ENCODE measurements at regions of chr6 and their contacts with region 1.

Region 1: GRCh38 chr6:109095027-109095834 is at the start of gene CEP57L1:
- DNase-seq: peak; percentile 94 to 97
- ATAC-seq: peak; percentile 71 to 87 (median 74)
- H3K4me3 ChIP-seq: peak within 1 kb of the TSS; percentile 64
- H3K4me3 Mint-ChIP-seq: peak within 1 kb of the TSS; percentile 94
- H3K27ac ChIP-seq: peak within 1 kb of the TSS; percentile 98
- H3K27ac Mint-ChIP-seq: peak within 1 kb of the TSS; percentile 98 to 99
- H3K4me1 ChIP-seq: peaks cover 8% of the 10 kb centered on the region
- H3K4me1 Mint-ChIP-seq: peaks cover 42 to 52% of the 10 kb centered on the region in 2 donors
- H3K27me3 ChIP-seq: no peaks in the 10 kb centered on the region
- H3K27me3 Mint-ChIP-seq: no peaks in the 10 kb centered on the region
- CTCF ChIP-seq: no peak
- total RNA-seq, gene CEP57L1: 8.9 to 12.5 (median 9.2) TPM

Region 2: DNA sequence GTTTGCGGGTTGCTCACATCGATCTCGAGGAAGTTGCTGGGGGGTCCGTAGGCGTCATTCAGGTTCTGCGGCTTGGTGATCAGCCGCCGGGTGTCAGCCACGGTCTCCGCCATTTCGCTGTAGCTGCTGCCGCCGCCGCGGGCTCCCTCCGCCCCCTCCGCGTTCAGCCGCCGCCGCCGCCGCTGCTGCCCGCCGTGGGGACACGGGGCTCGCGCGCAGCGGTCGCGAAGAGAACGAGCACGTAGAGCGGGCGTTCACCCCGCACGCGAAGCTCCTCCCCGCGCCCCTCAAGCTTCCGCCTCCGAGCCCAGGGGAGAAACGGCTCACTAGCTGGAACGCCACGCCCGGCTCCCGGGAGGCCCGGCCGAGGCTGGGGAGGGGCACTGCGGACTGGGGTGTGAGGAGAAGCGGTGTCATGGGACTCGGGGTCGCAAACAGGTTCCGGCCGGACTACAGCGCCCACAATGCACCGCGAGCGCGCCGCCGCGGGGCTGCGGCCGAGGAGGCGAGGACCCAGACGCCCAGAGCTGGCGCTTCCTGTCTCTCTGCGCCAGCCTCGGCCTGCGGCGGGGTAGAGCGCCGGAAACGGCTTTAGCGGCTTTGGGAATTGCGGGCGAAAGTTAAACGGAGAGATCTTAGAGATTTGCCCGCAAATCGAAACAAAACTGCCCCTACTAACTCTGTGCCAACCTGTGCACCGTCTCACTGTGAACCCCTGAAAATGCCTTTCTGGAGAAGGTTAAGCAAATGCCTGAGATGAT is 834.2 kb before region 1 on chr6 and contains the start of gene SNX3:
- intact Hi-C with region 1: loop called (anchors 10 kb)
- DNase-seq: peak; percentile 91 to 93
- ATAC-seq: peak; percentile 83 to 95 (median 86)
- H3K4me3 ChIP-seq: peak within 1 kb of the TSS; percentile 89
- H3K4me3 Mint-ChIP-seq: peak within 1 kb of the TSS; percentile 93
- H3K27ac ChIP-seq: peak within 1 kb of the TSS; percentile 98
- H3K27ac Mint-ChIP-seq: peak within 1 kb of the TSS; percentile 95 to 96
- H3K4me1 ChIP-seq: peaks cover 23% of the 10 kb centered on the region
- H3K4me1 Mint-ChIP-seq: peaks cover 16 to 34% of the 10 kb centered on the region in 2 donors
- H3K27me3 ChIP-seq: no peaks in the 10 kb centered on the region
- H3K27me3 Mint-ChIP-seq: no peaks in the 10 kb centered on the region
- CTCF ChIP-seq: no peak
- total RNA-seq, gene SNX3: 59.7 to 71.6 (median 70.6) TPM

Region 3: GRCh38 chr6:108558372-108559096 is 536.7 kb before region 1 on chr6:
- intact Hi-C with region 1: loop called (anchors 2 kb)
- DNase-seq: peak; percentile 97 to 99
- ATAC-seq: peak; percentile 59 to 80 (median 66)
- H3K4me3 ChIP-seq: peak overlapping the region; percentile 96
- H3K4me3 Mint-ChIP-seq: peak overlapping the region; percentile 96
- H3K27ac ChIP-seq: peak overlapping the region; percentile 100
- H3K27ac Mint-ChIP-seq: peak overlapping the region; percentile 97 to 98
- H3K4me1 ChIP-seq: peaks cover 21% of the 10 kb centered on the region
- H3K4me1 Mint-ChIP-seq: peaks cover 20 to 27% of the 10 kb centered on the region in 2 donors
- H3K27me3 ChIP-seq: no peaks in the 10 kb centered on the region
- H3K27me3 Mint-ChIP-seq: no peaks in the 10 kb centered on the region
- CTCF ChIP-seq: no peak

Region 4: GRCh38 chr6:108848116-108848868 is 246.9 kb before region 1 on chr6 and contains the start of gene ARMC2:
- intact Hi-C with region 1: loop called (anchors 1 kb)
- DNase-seq: peak; percentile 92 to 95
- ATAC-seq: peak; percentile 89 to 96 (median 91)
- H3K4me3 ChIP-seq: peak within 1 kb of the TSS; percentile 67
- H3K4me3 Mint-ChIP-seq: peak within 1 kb of the TSS; percentile 78
- H3K27ac ChIP-seq: peak within 1 kb of the TSS; percentile 77
- H3K27ac Mint-ChIP-seq: peak within 1 kb of the TSS; percentile 85 to 95
- H3K4me1 ChIP-seq: peaks cover 11% of the 10 kb centered on the region
- H3K4me1 Mint-ChIP-seq: peaks cover 6 to 23% of the 10 kb centered on the region in 2 donors
- H3K27me3 ChIP-seq: no peaks in the 10 kb centered on the region
- H3K27me3 Mint-ChIP-seq: no peaks in the 10 kb centered on the region
- CTCF ChIP-seq: no peak
- total RNA-seq, gene ARMC2: 9.4 to 13.8 (median 9.7) TPM

Region 5: DNA sequence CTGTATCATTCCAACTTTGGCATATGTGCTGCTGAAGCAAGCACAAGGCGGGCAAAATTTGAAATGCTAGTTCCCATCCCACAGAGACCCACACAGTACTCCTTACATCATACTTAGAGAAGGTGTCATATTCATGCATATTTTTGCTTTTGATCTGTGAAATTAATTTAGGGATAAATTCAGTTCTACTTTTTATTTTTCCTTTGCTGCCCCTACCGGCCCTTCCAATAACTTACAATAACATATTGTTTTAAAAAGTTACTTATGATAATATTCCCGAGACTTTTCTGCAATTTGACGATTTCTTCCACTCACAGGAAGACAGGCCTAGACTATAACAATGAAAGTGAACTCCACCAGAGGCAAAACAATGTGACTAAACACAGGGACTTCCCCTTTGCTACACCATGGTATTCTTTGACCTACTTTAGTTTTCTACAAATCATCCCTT is 35.6 kb before region 1 on chr6:
- intact Hi-C with region 1: loop called (anchors 2 kb)
- DNase-seq: peak in 1 of 2 donors; percentile 79
- ATAC-seq: peak; percentile 97 to 99 (median 98)
- H3K4me3 ChIP-seq: no peak overlapping the region
- H3K4me3 Mint-ChIP-seq: peak overlapping the region; percentile 57
- H3K27ac ChIP-seq: peak overlapping the region; percentile 85
- H3K27ac Mint-ChIP-seq: peak overlapping the region; percentile 94 to 95
- H3K4me1 ChIP-seq: peaks cover 13% of the 10 kb centered on the region
- H3K4me1 Mint-ChIP-seq: peaks cover 42 to 48% of the 10 kb centered on the region in 2 donors
- H3K27me3 ChIP-seq: no peaks in the 10 kb centered on the region
- H3K27me3 Mint-ChIP-seq: no peaks in the 10 kb centered on the region
- CTCF ChIP-seq: no peak

Region 6: GRCh38 chr6:109153752-109154151 is 58.5 kb after region 1 on chr6:
- intact Hi-C with region 1: no loop called
- DNase-seq: no peak
- ATAC-seq: no peak
- H3K4me3 ChIP-seq: no peak overlapping the region
- H3K4me3 Mint-ChIP-seq: no peak overlapping the region
- H3K27ac ChIP-seq: no peak overlapping the region
- H3K27ac Mint-ChIP-seq: no peak overlapping the region
- H3K4me1 ChIP-seq: no peaks in the 10 kb centered on the region
- H3K4me1 Mint-ChIP-seq: no peaks in the 10 kb centered on the region
- H3K27me3 ChIP-seq: no peaks in the 10 kb centered on the region
- H3K27me3 Mint-ChIP-seq: no peaks in the 10 kb centered on the region
- CTCF ChIP-seq: no peak

Region 7: GRCh38 chr6:109221543-109222195 is 126.4 kb after region 1 on chr6:
- intact Hi-C with region 1: no loop called
- DNase-seq: no peak
- ATAC-seq: peak in 1 of 3 donors; percentile 14
- H3K4me3 ChIP-seq: no peak overlapping the region
- H3K4me3 Mint-ChIP-seq: peak overlapping the region; percentile 40
- H3K27ac ChIP-seq: no peak overlapping the region
- H3K27ac Mint-ChIP-seq: peak overlapping the region; percentile 56 to 72
- H3K4me1 ChIP-seq: peaks cover 4% of the 10 kb centered on the region
- H3K4me1 Mint-ChIP-seq: peaks cover 33 to 45% of the 10 kb centered on the region in 2 donors
- H3K27me3 ChIP-seq: no peaks in the 10 kb centered on the region
- H3K27me3 Mint-ChIP-seq: peaks cover 0 to 11% of the 10 kb centered on the region in 2 donors
- CTCF ChIP-seq: no peak

Region 8: GRCh38 chr6:109236115-109237076 is 141.2 kb after region 1 on chr6:
- intact Hi-C with region 1: loop called (anchors 5 kb)
- DNase-seq: peak; percentile 32 to 54
- ATAC-seq: peak; percentile 62 to 73 (median 66)
- H3K4me3 ChIP-seq: no peak overlapping the region
- H3K4me3 Mint-ChIP-seq: peak overlapping the region; percentile 72
- H3K27ac ChIP-seq: peak overlapping the region; percentile 76
- H3K27ac Mint-ChIP-seq: peak overlapping the region; percentile 81 to 88
- H3K4me1 ChIP-seq: peaks cover 30% of the 10 kb centered on the region
- H3K4me1 Mint-ChIP-seq: peaks cover 36 to 38% of the 10 kb centered on the region in 2 donors
- H3K27me3 ChIP-seq: no peaks in the 10 kb centered on the region
- H3K27me3 Mint-ChIP-seq: no peaks in the 10 kb centered on the region
- CTCF ChIP-seq: peak; percentile 34

Region 9: GRCh38 chr6:109440331-109441068 is 345.3 kb after region 1 on chr6 and contains the starts of genes PPIL6 and SMPD2:
- intact Hi-C with region 1: loop called (anchors 10 kb)
- DNase-seq: peak; percentile 81 to 90
- ATAC-seq: peak; percentile 87 to 94 (median 89)
- H3K4me3 ChIP-seq: peak within 1 kb of the TSS; percentile 64
- H3K4me3 Mint-ChIP-seq: peak within 1 kb of the TSS; percentile 89
- H3K27ac ChIP-seq: peak within 1 kb of the TSS; percentile 74
- H3K27ac Mint-ChIP-seq: peak within 1 kb of the TSS; percentile 81 to 92
- H3K4me1 ChIP-seq: peaks cover 23% of the 10 kb centered on the region
- H3K4me1 Mint-ChIP-seq: peaks cover 17 to 32% of the 10 kb centered on the region in 2 donors
- H3K27me3 ChIP-seq: no peaks in the 10 kb centered on the region
- H3K27me3 Mint-ChIP-seq: no peaks in the 10 kb centered on the region
- CTCF ChIP-seq: no peak
- total RNA-seq, gene PPIL6: 0.28 to 0.70 (median 0.40) TPM
- total RNA-seq, gene SMPD2: 25.0 to 37.3 (median 29.3) TPM